ENCODE measurements at regions of chr13 and their contacts with region 1.

Region 1: DNA sequence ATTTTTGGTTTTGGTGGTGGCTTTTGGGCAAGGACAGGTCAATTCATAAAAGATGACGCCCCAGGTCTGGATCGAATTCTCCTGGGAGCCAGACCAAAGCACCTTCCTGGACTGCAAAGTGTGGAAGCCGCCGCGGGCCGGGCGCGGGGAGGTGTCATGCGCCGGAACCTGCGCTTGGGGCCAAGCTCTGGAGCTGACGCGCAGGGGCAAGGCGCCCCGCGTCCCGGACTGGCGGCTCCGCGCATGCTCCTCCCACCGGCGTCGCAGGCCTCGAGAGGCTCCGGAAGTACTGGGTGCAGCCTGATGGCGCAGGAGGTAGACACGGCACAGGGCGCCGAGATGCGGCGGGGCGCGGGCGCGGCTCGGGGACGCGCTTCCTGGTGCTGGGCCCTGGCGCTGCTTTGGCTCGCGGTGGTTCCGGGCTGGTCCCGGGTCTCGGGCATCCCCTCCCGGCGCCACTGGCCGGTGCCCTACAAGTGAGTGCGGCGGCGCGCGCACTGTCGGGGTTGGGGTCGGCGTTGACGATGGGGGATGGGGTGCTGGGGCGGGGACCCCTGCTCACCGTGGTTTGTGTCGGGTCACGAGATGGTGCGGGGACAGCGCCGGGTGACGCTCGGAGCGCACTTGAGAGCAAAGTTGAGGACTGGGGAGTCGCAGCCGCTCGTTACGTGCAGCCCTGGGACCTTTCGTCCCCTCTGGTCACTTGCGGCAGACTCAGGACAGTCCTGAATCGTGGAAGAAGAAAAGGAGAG is at the start of gene CLN5:
- DNase-seq: peak; percentile 96
- H3K4me3 ChIP-seq: peak within 1 kb of the TSS; percentile 79
- H3K27ac ChIP-seq: peak within 1 kb of the TSS; percentile 27
- H3K4me1 ChIP-seq: peaks cover 10% of the 10 kb centered on the region
- CTCF ChIP-seq: no peak
- total RNA-seq, gene CLN5: 10.1 and 11.7 TPM in 2 replicates

Region 2: DNA sequence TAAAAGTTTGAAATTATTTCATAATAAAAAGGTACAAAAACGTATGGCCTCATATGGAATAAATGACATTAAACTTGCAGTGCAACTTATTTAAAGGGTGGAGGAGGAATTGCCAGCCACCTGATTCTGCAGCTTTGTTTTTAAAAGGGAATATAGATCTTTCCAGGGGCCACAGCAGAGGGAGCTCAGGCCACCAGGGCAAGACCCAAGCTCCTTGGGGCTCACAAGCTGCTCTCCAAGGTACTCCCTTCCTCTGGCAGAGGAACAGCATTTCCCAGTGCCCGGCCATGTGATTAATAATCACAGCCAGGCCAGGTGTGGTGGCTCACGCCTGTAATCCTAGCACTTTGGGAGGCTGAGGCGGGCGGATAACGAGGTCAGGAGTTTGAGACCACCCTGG is 37.4 kb before region 1 on chr13:
- CTCF ChIA-PET with region 1: no interaction called
- POLR2A ChIA-PET with region 1: no interaction called
- intact Hi-C with region 1: loop called (anchors 1 kb)
- DNase-seq: no peak
- H3K4me3 ChIP-seq: no peak overlapping the region
- H3K27ac ChIP-seq: no peak overlapping the region
- H3K4me1 ChIP-seq: no peaks in the 10 kb centered on the region
- CTCF ChIP-seq: no peak

Region 3: DNA sequence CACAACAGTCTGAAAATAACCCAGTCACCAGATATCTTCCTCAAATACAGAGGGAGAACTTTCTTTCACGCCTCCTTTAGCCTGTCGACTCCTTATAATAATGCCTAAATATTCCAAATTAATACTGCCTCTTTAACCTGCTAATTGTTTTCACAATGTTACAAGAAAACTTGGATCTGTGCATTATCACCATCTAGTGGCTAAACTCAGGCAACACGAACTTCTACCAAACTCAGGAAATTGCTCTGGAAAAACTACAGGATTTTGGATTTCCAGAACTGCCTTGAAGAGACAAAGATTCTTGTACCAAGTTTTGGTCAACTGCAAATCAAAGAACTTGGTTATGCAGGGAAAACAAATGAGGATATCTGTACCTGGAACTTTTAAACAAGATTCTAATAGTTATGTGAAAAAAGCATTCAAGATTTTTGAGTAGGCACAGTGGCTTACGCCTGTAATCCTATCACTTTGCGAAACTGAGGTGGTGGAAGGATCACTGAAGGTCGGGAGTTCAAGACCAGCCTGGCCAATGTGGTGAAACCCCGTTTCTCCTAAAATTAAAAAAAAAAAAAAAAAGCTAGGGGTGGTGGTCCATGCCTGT is 10.7 kb after region 1 on chr13:
- CTCF ChIA-PET with region 1: interaction called, 4 read pairs
- POLR2A ChIA-PET with region 1: interaction called, 24 read pairs
- intact Hi-C with region 1: no loop called
- DNase-seq: peak; percentile 30
- H3K4me3 ChIP-seq: no peak overlapping the region
- H3K27ac ChIP-seq: no peak overlapping the region
- H3K4me1 ChIP-seq: peaks cover 9% of the 10 kb centered on the region
- CTCF ChIP-seq: peak; percentile 85

Region 4: DNA sequence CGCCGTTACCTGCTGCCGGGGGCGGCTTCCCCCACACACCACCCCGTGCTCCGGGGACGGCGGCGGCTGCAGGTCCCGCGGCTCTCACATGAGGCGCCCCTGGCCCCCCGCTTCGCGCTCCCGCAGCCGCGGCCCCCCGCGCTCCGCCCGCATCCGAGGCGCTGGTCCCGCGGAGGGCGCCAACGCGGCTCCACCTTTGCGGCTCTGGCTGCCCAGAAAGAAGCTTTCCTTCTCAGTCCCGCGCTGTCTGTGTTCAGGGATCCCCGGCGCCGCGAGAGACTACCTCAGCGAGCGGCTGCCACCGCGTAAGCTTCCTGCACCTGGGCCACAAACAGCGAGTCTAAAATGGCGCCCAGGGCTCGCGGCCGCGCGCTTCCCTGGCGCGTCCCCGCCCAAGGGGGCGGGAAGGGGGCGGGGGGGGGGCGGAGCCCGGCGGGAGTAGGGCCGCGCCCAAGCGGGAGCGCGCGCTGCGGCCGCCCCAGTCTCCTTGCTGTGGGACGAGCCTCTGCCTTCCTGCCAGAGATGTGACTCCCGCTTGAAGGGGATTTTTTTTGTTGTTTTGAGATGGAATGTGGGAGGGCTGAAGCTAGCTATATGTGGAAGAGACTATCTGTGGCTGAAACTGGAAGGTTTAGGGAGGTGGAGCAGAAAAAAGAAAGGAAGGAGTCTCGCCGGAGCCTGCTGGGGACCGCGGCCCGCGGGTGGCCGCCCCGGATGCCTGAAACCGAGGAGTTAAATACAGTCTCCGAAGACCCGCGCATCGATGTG is 35.0 kb after region 1 on chr13 and contains the start of gene FBXL3:
- CTCF ChIA-PET with region 1: no interaction called
- POLR2A ChIA-PET with region 1: interaction called, 28 read pairs
- intact Hi-C with region 1: loop called (anchors 1 kb)
- DNase-seq: peak; percentile 91
- H3K4me3 ChIP-seq: peak within 1 kb of the TSS; percentile 98
- H3K27ac ChIP-seq: peak within 1 kb of the TSS; percentile 91
- H3K4me1 ChIP-seq: peaks cover 36% of the 10 kb centered on the region
- CTCF ChIP-seq: no peak
- total RNA-seq, gene FBXL3: 21.6 and 23.4 TPM in 2 replicates

Region 5: GRCh38 chr13:77437267-77437666 is 445.3 kb after region 1 on chr13:
- CTCF ChIA-PET with region 1: no interaction called
- POLR2A ChIA-PET with region 1: no interaction called
- intact Hi-C with region 1: no loop called
- DNase-seq: no peak
- H3K4me3 ChIP-seq: no peak overlapping the region
- H3K27ac ChIP-seq: no peak overlapping the region
- H3K4me1 ChIP-seq: no peaks in the 10 kb centered on the region
- CTCF ChIP-seq: no peak

Region 6: GRCh38 chr13:77506874-77507273 is 514.9 kb after region 1 on chr13:
- CTCF ChIA-PET with region 1: no interaction called
- POLR2A ChIA-PET with region 1: no interaction called
- intact Hi-C with region 1: loop called (anchors 5 kb)
- DNase-seq: peak; percentile 31
- H3K4me3 ChIP-seq: no peak overlapping the region
- H3K27ac ChIP-seq: no peak overlapping the region
- H3K4me1 ChIP-seq: peaks cover 18% of the 10 kb centered on the region
- CTCF ChIP-seq: peak; percentile 80